ENCODE measurements at regions of chr3 and their contacts with region 1.

Region 1: DNA sequence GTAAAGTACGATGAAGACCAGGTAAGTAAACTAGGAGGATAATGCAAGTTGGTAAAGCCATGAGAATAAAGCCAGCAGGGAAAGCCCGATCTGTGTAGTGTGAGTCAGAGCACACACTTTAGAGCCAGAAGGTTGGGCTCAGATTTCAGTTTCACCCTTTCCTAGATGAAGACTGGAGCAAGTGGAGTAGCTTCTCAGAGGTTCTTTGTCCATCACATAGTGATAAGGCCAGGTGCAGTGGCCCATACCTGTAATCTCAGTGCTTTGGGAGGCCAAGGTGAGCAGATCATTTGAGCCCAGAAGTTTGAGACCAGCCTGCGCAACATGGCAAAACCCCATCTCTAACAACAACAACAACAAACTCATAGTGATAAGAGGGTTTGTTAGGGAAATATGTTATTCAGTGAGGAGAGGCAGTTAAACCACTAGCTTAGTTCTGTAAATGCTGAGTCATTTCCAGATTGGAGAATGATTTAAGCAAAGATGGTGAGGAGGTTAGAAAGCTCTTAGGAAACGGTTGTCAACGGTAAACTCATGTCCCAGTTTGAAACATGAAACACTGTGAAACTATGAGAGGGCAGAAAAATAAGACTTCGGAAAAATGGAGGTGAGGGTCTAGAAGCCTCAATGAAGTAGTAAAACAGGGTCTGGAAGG is 39.0 kb downstream of the IL12A start:
- DNase-seq: peak; percentile 36
- H3K4me3 Mint-ChIP-seq: no peak overlapping the region
- H3K27ac Mint-ChIP-seq: peak overlapping the region; percentile 86
- H3K4me1 Mint-ChIP-seq: peaks cover 15% of the 10 kb centered on the region
- H3K27me3 Mint-ChIP-seq: no peaks in the 10 kb centered on the region

Region 2: DNA sequence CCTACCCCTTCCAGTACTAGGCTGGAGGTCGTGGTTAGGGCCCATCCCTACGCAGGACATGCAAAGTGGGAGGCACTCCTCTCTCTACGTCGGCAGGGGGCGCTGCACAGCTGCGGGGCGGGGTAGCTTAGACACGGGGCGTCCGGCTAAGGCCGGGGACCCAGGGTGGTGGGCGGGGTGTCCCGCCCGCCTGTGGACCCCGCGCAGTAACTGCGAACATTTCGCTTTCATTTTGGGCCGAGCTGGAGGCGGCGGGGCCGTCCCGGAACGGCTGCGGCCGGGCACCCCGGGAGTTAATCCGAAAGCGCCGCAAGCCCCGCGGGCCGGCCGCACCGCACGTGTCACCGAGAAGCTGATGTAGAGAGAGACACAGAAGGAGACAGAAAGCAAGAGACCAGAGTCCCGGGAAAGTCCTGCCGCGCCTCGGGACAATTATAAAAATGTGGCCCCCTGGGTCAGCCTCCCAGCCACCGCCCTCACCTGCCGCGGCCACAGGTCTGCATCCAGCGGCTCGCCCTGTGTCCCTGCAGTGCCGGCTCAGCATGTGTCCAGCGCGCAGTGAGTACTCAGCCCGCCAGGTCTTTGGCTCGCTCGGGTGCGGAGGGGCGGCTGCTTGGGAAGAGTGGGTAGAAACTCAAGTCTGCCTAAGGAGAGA is 38.9 kb before region 1 on chr3 and contains the start of gene IL12A:
- CTCF ChIA-PET with region 1: interaction called, 15 read pairs
- POLR2A ChIA-PET with region 1: no interaction called
- intact Hi-C with region 1: loop called (anchors 1 kb)
- DNase-seq: peak; percentile 87
- H3K4me3 Mint-ChIP-seq: peak within 1 kb of the TSS; percentile 62
- H3K27ac Mint-ChIP-seq: no peak within 1 kb of the TSS
- H3K4me1 Mint-ChIP-seq: peaks cover 17% of the 10 kb centered on the region
- H3K27me3 Mint-ChIP-seq: no peaks in the 10 kb centered on the region
- total RNA-seq, gene IL12A: not detected

Region 3: DNA sequence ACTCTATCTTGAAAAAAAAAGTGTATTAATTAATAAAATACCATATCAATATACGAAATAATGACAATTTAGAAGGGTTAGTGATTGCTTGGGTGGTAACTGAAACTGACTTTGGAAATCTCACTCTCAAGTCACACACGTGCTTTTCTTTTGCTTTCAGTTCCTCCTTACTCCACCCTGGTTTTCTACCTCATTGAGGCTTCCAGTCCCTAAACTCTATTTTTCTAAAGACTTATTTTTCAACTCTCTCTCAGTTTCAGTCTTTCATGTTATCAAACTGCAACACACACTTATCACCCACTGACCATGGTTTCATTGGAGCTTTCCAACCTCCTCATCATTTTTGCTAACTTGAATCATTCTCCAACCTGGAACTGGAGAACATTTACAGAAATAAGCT is 15.6 kb before region 1 on chr3:
- CTCF ChIA-PET with region 1: interaction called, 5 read pairs
- POLR2A ChIA-PET with region 1: no interaction called
- intact Hi-C with region 1: loop called (anchors 1 kb)
- DNase-seq: no peak
- H3K4me3 Mint-ChIP-seq: no peak overlapping the region
- H3K27ac Mint-ChIP-seq: no peak overlapping the region
- H3K4me1 Mint-ChIP-seq: peaks cover 5% of the 10 kb centered on the region
- H3K27me3 Mint-ChIP-seq: no peaks in the 10 kb centered on the region

Region 4: DNA sequence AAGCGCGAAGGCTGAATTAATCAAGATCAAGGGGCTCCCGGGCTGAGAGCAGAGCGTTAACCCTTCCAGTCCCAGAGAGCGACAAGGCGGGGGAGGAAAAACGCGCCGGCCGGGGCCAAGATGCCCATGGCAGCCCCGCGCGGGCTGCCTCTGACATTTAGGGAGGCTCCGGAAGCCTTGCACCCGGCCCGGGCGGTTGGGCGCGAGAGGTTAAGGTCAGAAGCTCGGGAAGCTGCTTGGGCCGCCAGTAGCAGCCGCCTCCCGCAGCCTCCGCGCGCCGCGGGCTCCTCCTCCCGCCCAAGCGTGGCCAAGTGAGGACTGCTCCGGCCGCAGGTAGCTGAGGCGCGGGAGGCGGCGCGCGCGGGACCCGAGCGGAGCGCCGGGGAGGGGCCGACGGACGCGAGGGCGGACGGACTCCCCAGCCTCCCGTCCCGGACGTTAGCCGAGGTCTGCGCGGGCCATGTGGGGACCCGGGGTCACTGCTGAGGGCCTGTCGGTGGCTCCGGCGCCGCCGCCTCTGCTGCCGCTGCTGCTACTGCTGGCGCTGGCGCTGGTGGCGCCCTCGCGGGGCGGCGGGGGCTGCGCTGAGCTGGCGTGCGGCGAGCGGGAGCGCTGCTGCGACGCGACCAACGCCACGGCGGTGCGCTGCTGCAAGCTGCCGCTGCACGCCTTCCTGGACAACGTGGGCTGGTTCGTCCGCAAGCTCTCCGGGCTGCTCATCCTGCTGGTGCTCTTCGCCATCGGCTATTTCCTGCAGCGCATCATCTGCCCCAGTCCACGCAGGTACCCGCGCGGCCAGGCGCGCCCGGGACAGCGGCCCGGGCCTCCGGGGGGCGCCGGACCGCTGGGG is 197.7 kb after region 1 on chr3 and contains the start of gene C3orf80:
- CTCF ChIA-PET with region 1: interaction called, 3 read pairs
- POLR2A ChIA-PET with region 1: no interaction called
- intact Hi-C with region 1: loop called (anchors 2 kb)
- DNase-seq: peak; percentile 62
- H3K4me3 Mint-ChIP-seq: peak within 1 kb of the TSS; percentile 53
- H3K27ac Mint-ChIP-seq: no peak within 1 kb of the TSS
- H3K4me1 Mint-ChIP-seq: peaks cover 14% of the 10 kb centered on the region
- H3K27me3 Mint-ChIP-seq: peaks cover 51% of the 10 kb centered on the region
- total RNA-seq, gene C3orf80: not detected

Region 5: GRCh38 chr3:160399125-160400029 is 371.7 kb after region 1 on chr3 and contains the starts of genes IFT80 and SMC4:
- CTCF ChIA-PET with region 1: interaction called, 3 read pairs
- POLR2A ChIA-PET with region 1: no interaction called
- intact Hi-C with region 1: loop called (anchors 5 kb)
- DNase-seq: peak; percentile 98
- H3K4me3 Mint-ChIP-seq: peak within 1 kb of the TSS; percentile 98
- H3K27ac Mint-ChIP-seq: peak within 1 kb of the TSS; percentile 98
- H3K4me1 Mint-ChIP-seq: peaks cover 44% of the 10 kb centered on the region
- H3K27me3 Mint-ChIP-seq: peaks cover 4% of the 10 kb centered on the region
- total RNA-seq, gene IFT80: 13.4 to 13.9 TPM
- total RNA-seq, gene SMC4: 143 to 157 TPM

Region 6: DNA sequence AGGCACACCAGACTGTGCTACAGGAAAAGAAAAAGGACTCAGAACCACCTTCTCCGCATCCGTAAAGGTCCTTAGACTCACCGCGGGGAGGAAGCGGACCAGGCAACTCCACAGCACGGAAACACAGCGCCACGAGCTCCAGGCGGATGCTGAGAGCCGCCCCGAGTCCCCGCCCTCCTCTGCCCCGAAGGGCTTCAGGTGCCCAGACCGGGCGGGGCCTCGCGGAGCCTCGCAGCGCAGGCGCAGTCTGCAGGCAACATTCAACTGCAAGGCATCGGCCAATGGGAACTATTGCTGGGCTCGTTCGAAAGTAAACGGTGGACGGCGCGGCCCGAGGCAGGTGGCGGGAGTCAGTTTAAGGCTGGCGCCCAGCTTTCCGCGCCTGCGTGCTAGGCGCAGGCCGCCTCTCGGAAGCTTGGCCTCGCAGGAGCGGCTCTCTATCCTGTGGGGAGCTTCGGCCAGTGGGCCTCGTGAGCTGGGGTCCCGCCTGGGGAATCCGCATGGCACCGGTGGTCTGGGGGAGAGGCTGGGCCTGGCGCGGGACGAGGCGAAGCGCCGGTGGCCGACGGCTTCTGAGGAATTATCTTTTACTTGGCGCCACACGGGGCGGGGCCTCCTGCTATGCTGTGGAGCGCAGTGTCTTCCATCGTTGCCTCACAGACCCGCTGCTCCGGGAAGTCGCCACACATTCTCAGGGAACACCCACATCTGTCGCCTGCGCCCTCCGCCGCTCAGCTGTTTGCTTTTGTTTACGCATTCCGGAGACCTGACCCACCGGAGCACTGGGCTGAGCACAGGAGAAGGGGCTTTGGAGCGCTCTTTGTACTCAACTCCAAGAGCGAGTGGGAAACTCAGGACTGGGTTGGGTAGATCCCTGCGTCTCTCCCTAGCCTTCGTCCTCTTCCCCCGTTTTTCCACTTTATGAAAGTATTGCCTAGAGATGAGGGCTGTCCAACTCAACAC is 422.2 kb after region 1 on chr3 and contains the start of gene TRIM59:
- CTCF ChIA-PET with region 1: no interaction called
- POLR2A ChIA-PET with region 1: no interaction called
- intact Hi-C with region 1: loop called (anchors 1 kb)
- DNase-seq: peak; percentile 99
- H3K4me3 Mint-ChIP-seq: peak within 1 kb of the TSS; percentile 98
- H3K27ac Mint-ChIP-seq: peak within 1 kb of the TSS; percentile 99
- H3K4me1 Mint-ChIP-seq: peaks cover 28% of the 10 kb centered on the region
- H3K27me3 Mint-ChIP-seq: no peaks in the 10 kb centered on the region
- total RNA-seq, gene TRIM59: 27.3 to 30.0 TPM

Region 7: DNA sequence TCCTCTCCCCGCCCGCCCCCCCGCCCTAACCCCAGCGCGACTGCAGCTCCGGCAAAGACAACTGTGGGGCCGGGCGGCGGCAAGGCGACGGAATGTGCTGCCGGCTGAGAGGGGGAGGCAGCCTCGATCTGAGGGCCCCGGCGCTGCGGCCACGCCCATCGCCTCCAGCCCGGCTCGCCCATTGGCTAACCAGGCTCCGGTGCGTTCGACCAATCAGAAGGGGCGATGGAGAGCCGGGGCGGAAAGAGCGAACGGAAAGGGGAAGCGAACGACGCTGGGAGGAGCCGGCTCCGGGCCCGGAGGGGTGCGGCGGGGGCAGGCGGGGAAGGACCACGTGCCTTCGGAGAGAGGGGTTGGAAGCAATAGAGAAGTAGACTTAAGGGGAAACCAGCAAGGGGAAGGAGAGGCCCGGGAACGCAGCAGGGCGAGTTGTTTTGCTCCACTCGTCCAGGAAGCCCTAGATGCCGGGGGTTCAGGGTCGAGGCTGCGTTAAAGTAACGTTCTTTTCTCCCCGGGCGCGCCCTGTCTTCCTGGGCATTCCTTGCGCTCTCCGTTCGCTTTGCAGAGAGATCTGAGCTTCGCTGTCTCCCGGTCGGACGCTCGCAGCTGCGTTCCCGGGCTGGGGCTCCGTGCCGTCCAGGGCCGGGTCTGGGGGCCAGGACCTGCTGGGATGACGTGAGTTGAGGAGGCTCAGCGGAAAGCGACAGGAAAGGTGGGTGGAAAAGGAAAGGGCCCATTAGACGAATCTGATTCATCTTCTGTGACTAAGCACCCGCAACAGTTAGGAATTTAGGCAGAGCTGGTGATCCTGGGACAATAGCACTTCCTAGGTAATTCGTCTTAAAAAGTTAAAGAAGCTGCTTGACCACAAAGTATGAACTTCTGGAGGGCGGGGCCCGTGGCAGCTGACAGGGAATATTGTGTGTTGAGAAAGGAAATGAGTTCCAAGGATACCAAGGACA is 538.1 kb after region 1 on chr3 and contains the start of gene KPNA4:
- CTCF ChIA-PET with region 1: no interaction called
- POLR2A ChIA-PET with region 1: no interaction called
- intact Hi-C with region 1: loop called (anchors 5 kb)
- DNase-seq: peak; percentile 97
- H3K4me3 Mint-ChIP-seq: peak within 1 kb of the TSS; percentile 93
- H3K27ac Mint-ChIP-seq: peak within 1 kb of the TSS; percentile 97
- H3K4me1 Mint-ChIP-seq: peaks cover 45% of the 10 kb centered on the region
- H3K27me3 Mint-ChIP-seq: no peaks in the 10 kb centered on the region
- total RNA-seq, gene KPNA4: 44.9 to 48.4 TPM

Region 8: DNA sequence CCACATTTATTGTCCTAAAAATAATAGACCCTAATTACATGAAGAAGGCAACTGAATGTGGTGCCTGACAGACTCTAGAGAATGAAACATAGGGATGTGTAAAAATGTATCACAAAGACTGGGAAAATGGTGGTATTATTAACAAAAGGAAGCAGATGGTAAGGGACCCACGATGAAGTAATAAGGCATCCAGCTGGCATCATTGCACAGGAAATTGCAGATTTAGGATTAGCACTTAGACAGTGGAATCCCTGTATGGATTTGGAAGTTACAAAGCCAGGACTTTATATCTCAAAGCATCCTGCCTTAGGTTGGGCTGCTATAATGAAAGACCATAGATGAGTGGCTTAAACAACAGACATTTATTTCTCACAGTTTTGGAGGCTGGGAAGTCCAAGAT is 832.7 kb after region 1 on chr3:
- CTCF ChIA-PET with region 1: no interaction called
- POLR2A ChIA-PET with region 1: no interaction called
- intact Hi-C with region 1: no loop called
- DNase-seq: no peak
- H3K4me3 Mint-ChIP-seq: no peak overlapping the region
- H3K27ac Mint-ChIP-seq: no peak overlapping the region
- H3K4me1 Mint-ChIP-seq: no peaks in the 10 kb centered on the region
- H3K27me3 Mint-ChIP-seq: no peaks in the 10 kb centered on the region

Measured in activated CD4-positive, alpha-beta memory T cell treated with anti-CD3 and anti-CD28 coated beads for 36 hours (primary cell).